ENCODE measurements at regions of chr17 and their contacts with region 1.

Region 1: GRCh38 chr17:67152824-67153223 is 92.2 kb downstream of the HELZ start:
- DNase-seq: no peak
- H3K4me3 ChIP-seq: no peak overlapping the region
- H3K27ac ChIP-seq: no peak overlapping the region
- H3K4me1 ChIP-seq: peaks cover 4% of the 10 kb centered on the region
- H3K27me3 ChIP-seq: no peaks in the 10 kb centered on the region
- CTCF ChIP-seq: no peak

Region 2: DNA sequence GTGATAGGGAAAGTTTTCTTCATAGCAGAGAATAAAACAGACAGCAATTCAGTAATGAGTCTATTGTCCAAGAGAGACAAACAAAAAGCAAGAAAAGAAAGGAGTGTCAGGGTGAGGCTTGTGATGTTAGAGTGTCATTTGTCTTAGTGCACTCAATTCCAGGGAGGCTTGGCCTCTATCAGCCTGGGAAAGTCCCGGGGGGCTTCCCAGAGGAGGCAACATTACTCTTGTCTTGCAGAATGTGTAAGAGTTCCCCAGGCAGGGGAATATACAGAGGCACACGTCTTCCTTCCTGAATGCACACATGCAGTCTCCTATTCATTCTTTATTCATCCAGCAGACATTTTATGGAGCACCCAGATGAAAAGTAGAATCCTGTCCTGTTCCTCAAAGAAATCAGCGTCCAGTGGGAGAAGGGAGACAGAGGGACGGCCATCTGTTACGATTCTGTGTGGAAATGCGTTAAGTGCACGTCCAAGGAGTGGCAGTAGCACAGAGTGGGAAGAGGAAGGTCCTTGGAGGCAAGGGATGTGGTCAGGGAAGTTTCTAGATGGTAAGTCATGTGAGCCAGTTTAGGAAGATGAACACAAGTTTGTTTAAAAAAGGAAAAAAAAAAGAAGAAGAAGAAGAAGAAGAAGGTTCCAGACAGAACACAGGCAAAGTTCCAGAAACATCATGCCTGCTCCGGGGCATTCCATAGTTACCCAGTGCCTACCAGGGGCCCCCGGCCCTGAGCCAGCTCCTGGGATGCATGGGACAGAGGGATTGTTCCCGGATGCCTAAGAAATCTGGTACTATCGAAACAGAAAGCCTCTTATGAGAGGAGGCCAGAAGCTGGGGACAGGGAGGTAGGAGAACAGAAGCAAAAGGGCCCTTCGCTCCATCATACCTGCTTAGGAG is 167.2 kb before region 1 on chr17:
- CTCF ChIA-PET with region 1: no interaction called
- POLR2A ChIA-PET with region 1: no interaction called
- intact Hi-C with region 1: no loop called
- DNase-seq: no peak
- H3K4me3 ChIP-seq: no peak overlapping the region
- H3K27ac ChIP-seq: no peak overlapping the region
- H3K4me1 ChIP-seq: no peaks in the 10 kb centered on the region
- H3K27me3 ChIP-seq: no peaks in the 10 kb centered on the region
- CTCF ChIP-seq: no peak

Region 3: GRCh38 chr17:67171560-67171959 is 18.7 kb after region 1 on chr17:
- CTCF ChIA-PET with region 1: no interaction called
- POLR2A ChIA-PET with region 1: interaction called, 27 read pairs
- intact Hi-C with region 1: no loop called
- DNase-seq: no peak
- H3K4me3 ChIP-seq: no peak overlapping the region
- H3K27ac ChIP-seq: no peak overlapping the region
- H3K4me1 ChIP-seq: no peaks in the 10 kb centered on the region
- H3K27me3 ChIP-seq: no peaks in the 10 kb centered on the region
- CTCF ChIP-seq: no peak